WTC11 (cell line): ENCODE measurements at regions of chr20 and their contacts with region 1.

Region 1: GRCh38 chr20:2379511-2380229 is 1.0 kb upstream of the TGM6 start:
- DNase-seq: peak; percentile 20
- ATAC-seq: peak; percentile 90
- H3K4me3 Mint-ChIP-seq: no peak overlapping the region; the same call in 1 of the 2 replicates
- H3K27ac Mint-ChIP-seq: peak overlapping the region; percentile 84
- H3K4me1 Mint-ChIP-seq: peaks cover 23% of the 10 kb centered on the region
- H3K27me3 Mint-ChIP-seq: no peaks in the 10 kb centered on the region
- CTCF ChIP-seq: no peak

Region 2: GRCh38 chr20:2320813-2321658 is 58.6 kb before region 1 on chr20:
- CTCF ChIA-PET with region 1: no interaction called
- POLR2A ChIA-PET with region 1: no interaction called
- DNase-seq: no peak
- ATAC-seq: no peak
- H3K4me3 Mint-ChIP-seq: no peak overlapping the region
- H3K27ac Mint-ChIP-seq: no peak overlapping the region
- H3K4me1 Mint-ChIP-seq: no peaks in the 10 kb centered on the region
- H3K27me3 Mint-ChIP-seq: 0 out of 2 replicates have a peak, but pooled peaks cover 3% of the 10 kb centered on the region
- CTCF ChIP-seq: no peak

Region 3: GRCh38 chr20:2451939-2452732 is 72.5 kb after region 1 on chr20:
- CTCF ChIA-PET with region 1: interaction called, 10 read pairs
- POLR2A ChIA-PET with region 1: no interaction called
- DNase-seq: peak; percentile 91
- ATAC-seq: peak; percentile 86
- H3K4me3 Mint-ChIP-seq: no peak overlapping the region
- H3K27ac Mint-ChIP-seq: no peak overlapping the region
- H3K4me1 Mint-ChIP-seq: no peaks in the 10 kb centered on the region
- H3K27me3 Mint-ChIP-seq: no peaks in the 10 kb centered on the region
- CTCF ChIP-seq: peak; percentile 78